PC-3 (cell line): ENCODE measurements at regions of chr1 and their contacts with region 1.

Region 1: GRCh38 chr1:230084138-230084880 is 17.3 kb downstream of the GALNT2 start:
- DNase-seq: peak; percentile 100
- ATAC-seq: peak; percentile 93
- H3K4me3 ChIP-seq: peak overlapping the region; percentile 29; the same call in 1 of the 2 replicates
- H3K27ac ChIP-seq: peak overlapping the region; percentile 83
- H3K4me1 ChIP-seq: peaks cover 59% of the 10 kb centered on the region
- H3K27me3 ChIP-seq: no peaks in the 10 kb centered on the region
- CTCF ChIP-seq: no peak

Region 2: DNA sequence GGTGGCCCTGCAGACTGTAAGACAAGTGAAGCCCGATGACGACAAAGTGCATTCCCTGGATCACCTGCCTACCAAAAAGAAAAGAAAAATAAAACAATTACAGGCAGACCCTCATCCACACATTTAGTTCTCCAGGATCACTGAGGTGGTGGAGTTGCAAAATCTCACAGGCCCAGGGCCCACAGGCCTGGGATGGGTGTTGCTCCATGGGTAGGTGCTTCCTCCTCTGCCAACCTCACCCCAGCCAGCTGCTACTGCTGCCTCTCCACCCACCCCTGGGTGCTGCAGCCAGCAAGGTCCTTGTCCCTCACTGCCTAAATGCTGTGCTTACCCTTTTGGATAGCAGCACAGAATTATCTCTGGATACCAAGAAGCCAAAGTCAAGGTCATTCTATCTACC is 163.6 kb before region 1 on chr1:
- CTCF ChIA-PET with region 1: no interaction called
- POLR2A ChIA-PET with region 1: no interaction called
- intact Hi-C with region 1: no loop called
- DNase-seq: no peak
- ATAC-seq: no peak
- H3K4me3 ChIP-seq: no peak overlapping the region
- H3K27ac ChIP-seq: no peak overlapping the region
- H3K4me1 ChIP-seq: no peaks in the 10 kb centered on the region
- H3K27me3 ChIP-seq: peaks cover 41% of the 10 kb centered on the region
- CTCF ChIP-seq: no peak

Region 3: DNA sequence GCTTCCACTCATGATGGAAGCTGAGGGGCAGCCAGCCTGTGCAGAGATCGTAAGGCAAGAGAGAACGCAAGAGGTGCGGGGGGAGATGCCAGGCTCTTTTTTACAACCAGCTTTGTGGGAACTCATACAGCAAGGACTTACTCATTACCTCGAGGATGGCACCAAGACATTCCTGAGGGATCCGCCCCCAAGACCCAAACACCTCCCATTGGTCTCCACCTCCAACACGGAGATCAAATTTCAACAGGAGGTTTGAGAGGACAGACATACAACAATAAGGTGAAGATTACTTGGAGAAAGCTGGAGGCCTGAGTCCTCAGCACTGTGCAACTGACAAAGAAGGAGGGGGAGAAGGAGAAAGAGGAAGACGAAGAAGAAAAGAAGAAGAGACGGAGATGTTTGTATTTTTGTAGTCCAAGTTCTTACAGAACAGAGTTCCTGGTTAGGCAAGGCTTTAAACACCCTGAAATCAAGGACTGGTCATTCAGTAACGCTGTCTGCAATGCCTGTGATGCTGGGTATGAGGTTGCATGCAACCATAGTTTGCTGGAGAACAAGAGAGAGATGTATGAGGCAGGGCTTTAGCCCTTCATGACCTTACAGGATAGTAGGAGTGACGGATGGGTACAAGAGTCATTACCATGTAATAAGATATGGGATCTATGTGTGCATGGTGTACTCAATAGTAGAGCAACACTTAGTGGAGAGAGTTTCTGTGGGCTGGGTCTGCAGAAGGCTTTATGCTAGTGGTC is 37.0 kb before region 1 on chr1:
- CTCF ChIA-PET with region 1: no interaction called
- POLR2A ChIA-PET with region 1: no interaction called
- intact Hi-C with region 1: no loop called
- DNase-seq: peak; percentile 84
- ATAC-seq: peak; percentile 90
- H3K4me3 ChIP-seq: no peak overlapping the region
- H3K27ac ChIP-seq: no peak overlapping the region
- H3K4me1 ChIP-seq: peaks cover 10% of the 10 kb centered on the region
- H3K27me3 ChIP-seq: no peaks in the 10 kb centered on the region
- CTCF ChIP-seq: no peak

Region 4: DNA sequence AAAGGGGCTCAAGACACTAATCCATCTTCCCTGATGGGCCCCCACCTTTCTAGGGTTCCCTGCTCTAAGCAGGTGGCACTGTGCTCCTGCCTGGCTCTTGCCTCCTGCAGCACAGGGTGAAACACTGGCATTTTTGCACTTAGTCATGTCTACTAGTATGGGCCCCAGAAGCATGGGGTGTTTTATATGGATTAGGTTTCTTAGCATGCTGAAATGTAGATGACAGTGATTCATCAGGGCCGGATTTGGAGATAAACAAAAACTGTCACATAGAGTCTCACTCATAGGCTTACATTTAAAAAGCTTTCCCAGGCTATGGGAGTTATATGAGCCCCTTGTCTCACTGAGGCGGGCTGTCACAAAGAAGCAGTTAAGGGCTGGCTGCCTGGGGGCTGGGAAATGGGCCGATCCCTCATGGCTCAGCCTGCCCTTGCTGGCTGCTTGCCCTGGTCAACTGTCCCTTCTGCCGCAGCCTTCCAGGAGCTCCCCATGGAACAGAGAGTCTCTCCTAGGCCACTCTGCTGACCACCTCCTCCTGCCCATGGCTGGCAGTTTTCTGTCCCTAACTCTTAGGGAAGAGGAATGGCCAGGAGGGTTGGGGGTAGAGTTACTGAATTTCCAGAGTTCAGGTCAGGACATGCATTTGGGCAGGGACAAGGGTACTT is 10.8 kb before region 1 on chr1:
- CTCF ChIA-PET with region 1: interaction called, 3 read pairs
- POLR2A ChIA-PET with region 1: no interaction called
- intact Hi-C with region 1: loop called (anchors 1 kb)
- DNase-seq: peak; percentile 99
- ATAC-seq: peak; percentile 87
- H3K4me3 ChIP-seq: peak overlapping the region; percentile 36
- H3K27ac ChIP-seq: peak overlapping the region; percentile 91
- H3K4me1 ChIP-seq: peaks cover 76% of the 10 kb centered on the region
- H3K27me3 ChIP-seq: no peaks in the 10 kb centered on the region
- CTCF ChIP-seq: no peak; the same call in 1 of the 2 replicates

Region 5: GRCh38 chr1:230208619-230209261 is 124.4 kb after region 1 on chr1:
- CTCF ChIA-PET with region 1: no interaction called
- POLR2A ChIA-PET with region 1: no interaction called
- intact Hi-C with region 1: no loop called
- DNase-seq: no peak
- ATAC-seq: no peak
- H3K4me3 ChIP-seq: no peak overlapping the region
- H3K27ac ChIP-seq: no peak overlapping the region
- H3K4me1 ChIP-seq: peaks cover 7% of the 10 kb centered on the region; the same call in 1 of the 2 replicates
- H3K27me3 ChIP-seq: no peaks in the 10 kb centered on the region
- CTCF ChIP-seq: no peak